Endothelial cell of umbilical vein (primary cell): ENCODE measurements at regions of chr2 and their contacts with region 1.

Region 1: GRCh38 chr2:186384218-186384617 is 101.8 kb upstream of the ZC3H15 start:
- DNase-seq: no peak
- H3K4me3 ChIP-seq: no peak overlapping the region
- H3K27ac ChIP-seq: no peak overlapping the region
- H3K4me1 ChIP-seq: no peaks in the 10 kb centered on the region
- H3K27me3 ChIP-seq: no peaks in the 10 kb centered on the region
- CTCF ChIP-seq: no peak
- POLR2A ChIP-seq: no peak

Region 2: GRCh38 chr2:186399082-186399644 is 14.9 kb after region 1 on chr2:
- CTCF ChIA-PET with region 1: no interaction called
- POLR2A ChIA-PET with region 1: no interaction called
- dilution Hi-C with region 1: no loop called
- intact Hi-C with region 1: no loop called
- DNase-seq: no peak
- H3K4me3 ChIP-seq: no peak overlapping the region
- H3K27ac ChIP-seq: no peak overlapping the region
- H3K4me1 ChIP-seq: no peaks in the 10 kb centered on the region
- H3K27me3 ChIP-seq: no peaks in the 10 kb centered on the region
- CTCF ChIP-seq: no peak
- POLR2A ChIP-seq: no peak

Region 3: DNA sequence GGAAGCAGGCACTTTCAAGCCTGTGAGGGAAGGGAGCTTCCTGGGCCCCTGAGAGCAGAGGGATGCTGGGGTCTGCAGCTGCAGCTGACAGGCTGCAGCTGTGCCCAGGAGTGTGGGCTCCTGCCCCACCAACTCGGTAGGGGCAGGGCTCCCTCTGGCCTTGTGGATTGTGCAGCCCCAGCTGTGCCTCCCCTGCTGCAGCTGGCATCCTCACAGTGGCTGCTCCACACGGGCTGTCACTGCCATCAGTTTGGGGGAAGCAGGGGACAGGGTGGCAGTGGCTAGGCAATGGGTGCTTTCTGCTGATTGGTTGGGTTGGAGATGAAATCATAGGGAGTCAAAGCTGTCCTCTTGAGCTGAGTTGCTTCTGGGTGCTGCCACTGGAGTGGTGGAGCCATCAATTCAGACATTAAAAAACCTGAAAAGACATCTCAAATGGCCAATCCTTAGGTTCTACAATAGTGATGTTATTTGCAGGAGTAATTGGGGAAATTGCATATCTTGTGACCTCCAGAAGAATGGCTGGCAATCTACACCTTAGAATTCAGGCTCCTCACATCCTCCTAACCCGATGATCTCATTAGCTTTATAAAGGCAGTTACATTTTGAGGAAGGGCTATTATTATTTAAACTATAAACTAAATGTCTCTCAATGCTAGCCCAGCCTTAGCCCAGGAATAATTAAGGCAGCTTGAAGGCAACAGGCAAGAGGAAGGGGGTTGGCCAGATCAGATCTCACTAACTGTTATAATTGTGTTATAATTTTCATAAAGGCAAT is 350.9 kb after region 1 on chr2:
- CTCF ChIA-PET with region 1: no interaction called
- POLR2A ChIA-PET with region 1: interaction called, 10 read pairs
- dilution Hi-C with region 1: no loop called
- intact Hi-C with region 1: no loop called
- DNase-seq: no peak
- H3K4me3 ChIP-seq: no peak overlapping the region
- H3K27ac ChIP-seq: no peak overlapping the region
- H3K4me1 ChIP-seq: no peaks in the 10 kb centered on the region
- H3K27me3 ChIP-seq: no peaks in the 10 kb centered on the region
- CTCF ChIP-seq: no peak
- POLR2A ChIP-seq: no peak